GM12878 (cell line): ENCODE measurements at regions of chr4 and their contacts with region 1.

Region 1: DNA sequence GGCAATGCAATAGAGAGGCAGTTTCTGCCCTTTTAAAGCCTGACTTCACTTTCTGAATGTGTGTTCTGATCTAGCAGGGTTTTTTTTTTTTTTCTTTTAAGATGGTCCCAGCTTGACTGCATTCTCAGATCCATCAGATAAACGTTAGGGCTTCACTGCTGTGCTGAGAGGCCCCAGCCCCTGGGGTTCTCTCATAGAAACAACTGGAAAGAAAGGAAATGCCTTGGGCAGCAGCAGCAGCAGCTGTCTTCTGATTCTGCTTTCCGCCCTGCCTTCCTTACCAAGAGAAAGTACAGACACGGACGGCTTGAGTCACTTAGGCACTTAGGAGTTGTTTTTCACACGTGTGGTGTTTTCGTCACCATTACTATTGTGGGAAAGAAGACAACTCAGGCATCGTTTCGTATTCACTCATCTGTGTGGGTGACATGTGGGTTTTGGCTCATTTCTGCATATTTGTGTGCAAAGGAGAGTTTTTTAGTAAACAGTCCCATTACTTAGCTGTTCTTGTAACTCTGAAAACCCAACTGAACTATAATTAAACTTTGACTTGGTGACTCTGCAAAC is 172.0 kb downstream of the PTTG2 start:
- DNase-seq: peak; percentile 100
- ATAC-seq: peak; percentile 63
- H3K4me3 ChIP-seq: 0 out of 2 replicates have a peak overlapping the region, but pooled peaks have one; percentile 10
- H3K27ac ChIP-seq: peak overlapping the region; percentile 96
- H3K4me1 ChIP-seq: peaks cover 68% of the 10 kb centered on the region
- H3K27me3 ChIP-seq: no peaks in the 10 kb centered on the region
- CTCF ChIP-seq: no peak
- EP300 ChIP-seq: peak; percentile 100
- POLR2A ChIP-seq: peak; percentile 74
- RAD21 ChIP-seq: peak; percentile 14; the same call in 1 of the 2 replicates

Region 2: DNA sequence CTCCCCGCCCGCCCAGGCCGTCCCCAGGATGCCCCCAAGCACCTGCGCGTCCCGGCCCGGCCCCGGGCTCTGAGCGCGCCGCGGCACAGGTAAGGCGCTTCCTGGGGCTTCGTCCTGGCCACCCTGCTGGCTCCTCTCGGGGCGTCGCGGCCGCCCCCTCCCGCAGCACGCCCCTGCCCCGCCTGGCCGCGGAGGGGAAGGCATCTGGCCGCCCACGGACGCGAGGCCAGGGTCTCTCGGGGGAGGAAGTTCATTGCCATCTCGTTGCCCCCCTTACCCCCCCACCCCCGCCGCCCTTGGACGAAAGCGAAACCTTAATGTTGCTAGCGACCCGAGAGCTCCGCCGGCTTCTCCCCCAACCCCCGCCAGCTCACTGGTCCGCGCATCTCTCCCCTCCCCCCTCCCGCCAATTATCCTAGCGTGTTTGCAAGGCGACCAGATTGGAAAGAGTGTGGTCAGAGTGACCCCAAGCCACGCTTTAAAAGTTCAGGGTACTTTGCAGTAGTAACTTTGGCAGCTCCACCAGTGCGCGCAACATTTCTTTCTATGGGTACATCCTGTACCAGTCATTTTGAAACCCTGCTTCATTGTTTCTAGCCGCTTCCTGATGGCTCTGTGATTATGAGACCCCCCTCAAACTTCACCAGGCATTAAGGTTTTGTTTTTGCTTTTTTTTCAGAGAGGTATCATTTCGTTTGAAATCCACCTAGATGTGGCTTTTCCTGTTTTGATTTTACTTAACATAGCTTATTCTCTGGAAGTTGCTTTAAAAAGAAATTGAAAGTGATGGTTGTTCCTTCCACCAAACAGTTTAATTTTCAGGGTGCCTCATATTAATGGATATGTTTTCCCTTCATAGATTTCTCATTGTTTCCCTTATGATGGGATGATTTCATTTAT is 240.7 kb before region 1 on chr4:
- CTCF ChIA-PET with region 1: interaction called, 3 read pairs
- POLR2A ChIA-PET with region 1: no interaction called
- RAD21 ChIA-PET with region 1: interaction called, 4 read pairs
- SMC1A ChIA-PET with region 1: no interaction called
- in situ Hi-C with region 1: no loop called
- intact Hi-C with region 1: loop called (anchors 5 kb)
- DNase-seq: peak; percentile 79
- ATAC-seq: peak; percentile 69
- H3K4me3 ChIP-seq: peak overlapping the region; percentile 59
- H3K27ac ChIP-seq: peak overlapping the region; percentile 70
- H3K4me1 ChIP-seq: peaks cover 18% of the 10 kb centered on the region
- H3K27me3 ChIP-seq: no peaks in the 10 kb centered on the region
- CTCF ChIP-seq: peak in 1 of 3 experiments; percentile 15; a peak in 1 of 6 replicates
- EP300 ChIP-seq: peak in 1 of 2 experiments; percentile 70; a peak in 1 of 4 replicates
- POLR2A ChIP-seq: peak; percentile 72
- RAD21 ChIP-seq: no peak

Region 3: GRCh38 chr4:38090455-38091246 is 41.5 kb before region 1 on chr4:
- CTCF ChIA-PET with region 1: no interaction called
- POLR2A ChIA-PET with region 1: interaction called, 5 read pairs
- RAD21 ChIA-PET with region 1: interaction called, 4 read pairs
- SMC1A ChIA-PET with region 1: interaction called, 10 read pairs
- in situ Hi-C with region 1: no loop called
- intact Hi-C with region 1: no loop called
- DNase-seq: no peak
- ATAC-seq: no peak
- H3K4me3 ChIP-seq: no peak overlapping the region
- H3K27ac ChIP-seq: peak overlapping the region; percentile 33; the same call in 1 of the 2 replicates
- H3K4me1 ChIP-seq: peaks cover 10% of the 10 kb centered on the region
- H3K27me3 ChIP-seq: no peaks in the 10 kb centered on the region
- CTCF ChIP-seq: no peak
- EP300 ChIP-seq: no peak
- POLR2A ChIP-seq: no peak
- RAD21 ChIP-seq: no peak

Region 4: GRCh38 chr4:38160487-38161207 is 28.5 kb after region 1 on chr4:
- CTCF ChIA-PET with region 1: interaction called, 26 read pairs
- POLR2A ChIA-PET with region 1: interaction called, 38 read pairs
- RAD21 ChIA-PET with region 1: interaction called, 52 read pairs
- SMC1A ChIA-PET with region 1: interaction called, 47 read pairs
- in situ Hi-C with region 1: no loop called
- intact Hi-C with region 1: loop called (anchors 1 kb)
- DNase-seq: peak; percentile 69
- ATAC-seq: peak; percentile 91
- H3K4me3 ChIP-seq: no peak overlapping the region
- H3K27ac ChIP-seq: peak overlapping the region; percentile 57
- H3K4me1 ChIP-seq: peaks cover 10% of the 10 kb centered on the region
- H3K27me3 ChIP-seq: no peaks in the 10 kb centered on the region
- CTCF ChIP-seq: no peak
- EP300 ChIP-seq: peak; percentile 87 to 96; a peak in 3 of 4 replicates
- POLR2A ChIP-seq: no peak
- RAD21 ChIP-seq: peak; percentile 16; the same call in 1 of the 2 replicates

Region 5: DNA sequence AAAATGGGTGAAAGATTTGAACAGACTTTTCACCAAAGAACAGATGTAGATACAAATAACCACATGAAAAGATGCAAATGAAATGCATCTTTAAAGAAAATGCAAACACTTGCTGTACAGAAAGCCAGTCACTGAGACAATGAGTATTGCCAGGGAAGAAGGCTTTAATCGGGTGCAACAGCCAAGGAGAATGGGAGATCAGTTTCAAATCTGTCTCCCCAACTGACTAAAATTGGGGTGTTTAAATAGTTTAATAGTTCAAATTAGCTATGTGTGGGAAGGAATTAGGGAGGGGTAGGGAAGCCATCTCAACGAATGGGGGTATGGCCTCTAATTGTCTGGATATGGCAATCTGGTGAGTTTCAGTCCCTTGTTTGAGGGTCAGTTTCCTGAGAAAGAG is 123.4 kb after region 1 on chr4:
- CTCF ChIA-PET with region 1: no interaction called
- POLR2A ChIA-PET with region 1: no interaction called
- RAD21 ChIA-PET with region 1: no interaction called
- SMC1A ChIA-PET with region 1: no interaction called
- in situ Hi-C with region 1: no loop called
- intact Hi-C with region 1: no loop called
- DNase-seq: no peak
- ATAC-seq: no peak
- H3K4me3 ChIP-seq: no peak overlapping the region
- H3K27ac ChIP-seq: no peak overlapping the region
- H3K4me1 ChIP-seq: no peaks in the 10 kb centered on the region
- H3K27me3 ChIP-seq: no peaks in the 10 kb centered on the region
- CTCF ChIP-seq: no peak
- EP300 ChIP-seq: no peak
- POLR2A ChIP-seq: no peak
- RAD21 ChIP-seq: no peak

Region 6: GRCh38 chr4:38319456-38320342 is 187.5 kb after region 1 on chr4:
- CTCF ChIA-PET with region 1: interaction called, 7 read pairs
- POLR2A ChIA-PET with region 1: interaction called, 5 read pairs
- RAD21 ChIA-PET with region 1: interaction called, 8 read pairs
- SMC1A ChIA-PET with region 1: interaction called, 5 read pairs
- in situ Hi-C with region 1: loop called (anchors 5 kb)
- intact Hi-C with region 1: loop called (anchors 2 kb)
- DNase-seq: peak; percentile 74
- ATAC-seq: peak; percentile 80
- H3K4me3 ChIP-seq: peak overlapping the region; percentile 47
- H3K27ac ChIP-seq: peak overlapping the region; percentile 91
- H3K4me1 ChIP-seq: peaks cover 27% of the 10 kb centered on the region
- H3K27me3 ChIP-seq: no peaks in the 10 kb centered on the region
- CTCF ChIP-seq: peak; percentile 93 to 99 (median 99)
- EP300 ChIP-seq: no peak
- POLR2A ChIP-seq: no peak
- RAD21 ChIP-seq: peak; percentile 99

Region 7: DNA sequence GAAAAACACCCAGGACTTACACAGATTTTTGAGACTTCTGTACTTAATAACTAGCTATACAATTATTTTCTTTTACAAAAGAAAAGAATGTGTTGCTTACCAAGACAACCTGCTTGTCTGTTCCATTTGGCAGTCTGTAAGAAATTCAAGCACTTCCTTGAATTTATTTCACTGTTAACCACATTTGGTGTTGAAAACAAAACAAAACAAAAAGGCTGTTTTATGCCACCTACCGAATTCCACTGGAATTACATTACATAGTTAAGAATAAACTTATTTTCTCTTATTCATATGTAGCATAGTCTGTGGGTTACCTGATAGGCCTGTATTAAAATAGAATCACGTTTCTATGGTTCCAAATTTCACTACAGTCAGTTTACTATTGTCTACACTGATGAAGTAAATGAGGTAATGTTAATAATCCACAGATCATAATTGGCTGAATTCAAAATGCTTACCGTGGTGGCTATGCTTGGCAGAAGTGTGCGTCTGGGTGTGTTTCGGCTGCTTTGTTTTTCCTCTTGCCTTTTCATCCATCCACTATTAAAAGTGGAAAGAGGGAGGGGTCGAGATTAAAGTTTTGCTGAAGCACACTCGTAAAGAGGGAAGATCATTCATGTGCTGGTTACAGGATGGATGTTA is 672.6 kb after region 1 on chr4 and contains the start of gene TLR1:
- CTCF ChIA-PET with region 1: interaction called, 7 read pairs
- POLR2A ChIA-PET with region 1: no interaction called
- RAD21 ChIA-PET with region 1: interaction called, 7 read pairs
- SMC1A ChIA-PET with region 1: interaction called, 8 read pairs
- in situ Hi-C with region 1: no loop called
- intact Hi-C with region 1: loop called (anchors 1 kb)
- DNase-seq: peak; percentile 62
- ATAC-seq: peak; percentile 67
- H3K4me3 ChIP-seq: peak within 1 kb of the TSS; percentile 41
- H3K27ac ChIP-seq: peak within 1 kb of the TSS; percentile 86
- H3K4me1 ChIP-seq: peaks cover 20% of the 10 kb centered on the region
- H3K27me3 ChIP-seq: no peaks in the 10 kb centered on the region
- CTCF ChIP-seq: peak; percentile 22 to 47 (median 38); a peak in 5 of 6 replicates
- EP300 ChIP-seq: no peak
- POLR2A ChIP-seq: no peak
- RAD21 ChIP-seq: peak; percentile 64
- polyA plus RNA-seq, gene TLR1: 9.3 to 9.5 TPM